Common myeloid progenitor, CD34-positive (primary cell): ENCODE measurements at regions of chr11 and their contacts with region 1.

Region 1: DNA sequence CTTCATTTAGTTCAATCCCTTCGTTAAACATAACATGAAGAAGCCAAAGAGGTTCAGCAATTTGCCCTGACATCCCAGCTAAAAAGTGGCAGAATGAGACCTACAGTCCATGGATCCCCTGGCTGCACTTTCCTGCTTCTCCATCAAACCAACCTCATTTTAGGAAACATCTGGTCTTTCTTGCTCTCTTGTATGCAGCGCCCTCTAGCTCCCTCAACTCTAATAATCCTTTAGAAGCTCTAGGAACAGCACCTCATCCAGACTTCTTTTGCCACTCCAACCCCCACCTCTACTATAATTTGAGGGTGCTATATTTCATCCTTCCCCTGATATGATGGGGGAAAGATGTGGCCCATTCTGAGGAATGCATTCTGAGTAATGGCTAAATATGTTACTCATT is 7.4 kb downstream of the CNTF start:
- DNase-seq: peak; percentile 65 to 82 (median 82)
- H3K4me3 ChIP-seq: no peak overlapping the region
- H3K27ac ChIP-seq: no peak overlapping the region
- H3K4me1 ChIP-seq: peaks cover 0 to 7% (median 1%) of the 10 kb centered on the region in 4 experiments
- H3K27me3 ChIP-seq: no peaks in the 10 kb centered on the region

Region 2: GRCh38 chr11:58524232-58525036 is 105.4 kb before region 1 on chr11:
- CTCF ChIA-PET with region 1: interaction called, 11 read pairs
- POLR2A ChIA-PET with region 1: no interaction called
- DNase-seq: peak; percentile 85 to 86 (median 85)
- H3K4me3 ChIP-seq: peak overlapping the region in 6 of 7 experiments; percentile 27 to 68 (median 48)
- H3K27ac ChIP-seq: peak overlapping the region; percentile 74 to 85
- H3K4me1 ChIP-seq: peaks cover 12 to 40% (median 29%) of the 10 kb centered on the region in 4 experiments
- H3K27me3 ChIP-seq: no peaks in the 10 kb centered on the region

Region 3: GRCh38 chr11:58578635-58579191 is 51.1 kb before region 1 on chr11 and contains the start of gene ZFP91:
- CTCF ChIA-PET with region 1: interaction called, 38 read pairs
- POLR2A ChIA-PET with region 1: interaction called, 7 read pairs
- DNase-seq: peak; percentile 99 to 100 (median 99)
- H3K4me3 ChIP-seq: peak within 1 kb of the TSS; percentile 87 to 96 (median 92)
- H3K27ac ChIP-seq: peak within 1 kb of the TSS; percentile 100
- H3K4me1 ChIP-seq: peaks cover 46 to 67% (median 58%) of the 10 kb centered on the region in 4 experiments
- H3K27me3 ChIP-seq: no peaks in the 10 kb centered on the region

Region 4: GRCh38 chr11:58640386-58641023 is 10.6 kb after region 1 on chr11:
- CTCF ChIA-PET with region 1: interaction called, 30 read pairs
- POLR2A ChIA-PET with region 1: no interaction called
- DNase-seq: peak in 2 of 3 donors; percentile 58 to 76
- H3K4me3 ChIP-seq: no peak overlapping the region
- H3K27ac ChIP-seq: peak overlapping the region in 1 of 2 experiments; percentile 8
- H3K4me1 ChIP-seq: peaks cover 3 to 20% (median 17%) of the 10 kb centered on the region in 4 experiments
- H3K27me3 ChIP-seq: no peaks in the 10 kb centered on the region

Region 5: GRCh38 chr11:58671983-58672633 is 42.3 kb after region 1 on chr11:
- CTCF ChIA-PET with region 1: no interaction called
- POLR2A ChIA-PET with region 1: no interaction called
- DNase-seq: no peak
- H3K4me3 ChIP-seq: no peak overlapping the region
- H3K27ac ChIP-seq: no peak overlapping the region
- H3K4me1 ChIP-seq: no peaks in the 10 kb centered on the region
- H3K27me3 ChIP-seq: no peaks in the 10 kb centered on the region

Region 6: GRCh38 chr11:58788355-58789023 is 158.6 kb after region 1 on chr11:
- CTCF ChIA-PET with region 1: interaction called, 11 read pairs
- POLR2A ChIA-PET with region 1: no interaction called
- DNase-seq: peak; percentile 60 to 79 (median 78)
- H3K4me3 ChIP-seq: no peak overlapping the region
- H3K27ac ChIP-seq: no peak overlapping the region
- H3K4me1 ChIP-seq: peaks cover 0 to 6% (median 0%) of the 10 kb centered on the region in 4 experiments
- H3K27me3 ChIP-seq: no peaks in the 10 kb centered on the region